ENCODE measurements at regions of chr5 and their contacts with region 1.

Region 1: GRCh38 chr5:127072861-127073846 is at the start of gene C5orf63:
- DNase-seq: peak in 1 of 2 experiments; percentile 58
- H3K4me3 ChIP-seq: peak within 1 kb of the TSS; percentile 82
- H3K27ac ChIP-seq: no peak within 1 kb of the TSS
- H3K4me1 ChIP-seq: peaks cover 18% of the 10 kb centered on the region
- H3K27me3 ChIP-seq: no peaks in the 10 kb centered on the region
- CTCF ChIP-seq: no peak
- total RNA-seq, gene C5orf63: 9.8 and 9.9 TPM in 2 replicates

Region 2: DNA sequence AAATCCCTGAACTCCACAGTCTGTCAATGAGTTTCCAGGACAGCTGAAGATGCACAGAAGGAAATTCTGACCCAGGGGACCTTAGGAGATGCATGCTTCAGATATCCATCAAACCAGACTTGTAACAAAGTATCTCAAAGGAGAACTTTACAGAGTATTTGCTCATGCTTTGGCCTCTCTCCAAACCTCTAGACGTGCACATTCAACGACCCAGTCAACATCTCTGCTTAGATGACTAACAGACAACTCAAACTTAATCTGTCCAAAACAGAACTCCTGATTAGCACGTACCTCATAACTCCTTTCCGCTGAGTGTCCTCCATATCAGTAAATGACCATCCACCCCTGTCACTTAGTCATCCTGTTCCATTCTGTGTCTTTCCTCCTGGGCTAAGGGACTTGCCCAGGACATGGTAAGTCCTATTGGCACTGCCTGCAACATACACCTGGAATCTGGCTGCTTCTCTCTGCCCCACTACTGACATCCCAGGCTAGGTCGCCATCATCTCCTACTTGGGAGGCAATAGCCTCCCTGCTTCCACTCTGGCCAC is 188.8 kb before region 1 on chr5:
- CTCF ChIA-PET with region 1: no interaction called
- POLR2A ChIA-PET with region 1: no interaction called
- intact Hi-C with region 1: no loop called
- DNase-seq: peak in 1 of 2 experiments; percentile 53
- H3K4me3 ChIP-seq: no peak overlapping the region
- H3K27ac ChIP-seq: no peak overlapping the region
- H3K4me1 ChIP-seq: peaks cover 5% of the 10 kb centered on the region
- H3K27me3 ChIP-seq: no peaks in the 10 kb centered on the region
- CTCF ChIP-seq: no peak

Region 3: GRCh38 chr5:127030259-127031146 is 42.7 kb before region 1 on chr5 and contains the start of gene MARCHF3:
- CTCF ChIA-PET with region 1: no interaction called
- POLR2A ChIA-PET with region 1: no interaction called
- intact Hi-C with region 1: loop called (anchors 2 kb)
- DNase-seq: peak; percentile 87 to 96
- H3K4me3 ChIP-seq: peak within 1 kb of the TSS; percentile 81
- H3K27ac ChIP-seq: no peak within 1 kb of the TSS
- H3K4me1 ChIP-seq: peaks cover 4% of the 10 kb centered on the region; the same call in 1 of the 2 replicates
- H3K27me3 ChIP-seq: no peaks in the 10 kb centered on the region
- CTCF ChIP-seq: peak; percentile 16; the same call in 1 of the 2 replicates
- total RNA-seq, gene MARCHF3: 0.35 and 0.75 TPM in 2 replicates